Activated CD4-positive, alpha-beta T cell treated with anti-CD3 and anti-CD28 coated beads for 36 hours (primary cell): ENCODE measurements at regions of chr17 and their contacts with region 1.

Region 1: DNA sequence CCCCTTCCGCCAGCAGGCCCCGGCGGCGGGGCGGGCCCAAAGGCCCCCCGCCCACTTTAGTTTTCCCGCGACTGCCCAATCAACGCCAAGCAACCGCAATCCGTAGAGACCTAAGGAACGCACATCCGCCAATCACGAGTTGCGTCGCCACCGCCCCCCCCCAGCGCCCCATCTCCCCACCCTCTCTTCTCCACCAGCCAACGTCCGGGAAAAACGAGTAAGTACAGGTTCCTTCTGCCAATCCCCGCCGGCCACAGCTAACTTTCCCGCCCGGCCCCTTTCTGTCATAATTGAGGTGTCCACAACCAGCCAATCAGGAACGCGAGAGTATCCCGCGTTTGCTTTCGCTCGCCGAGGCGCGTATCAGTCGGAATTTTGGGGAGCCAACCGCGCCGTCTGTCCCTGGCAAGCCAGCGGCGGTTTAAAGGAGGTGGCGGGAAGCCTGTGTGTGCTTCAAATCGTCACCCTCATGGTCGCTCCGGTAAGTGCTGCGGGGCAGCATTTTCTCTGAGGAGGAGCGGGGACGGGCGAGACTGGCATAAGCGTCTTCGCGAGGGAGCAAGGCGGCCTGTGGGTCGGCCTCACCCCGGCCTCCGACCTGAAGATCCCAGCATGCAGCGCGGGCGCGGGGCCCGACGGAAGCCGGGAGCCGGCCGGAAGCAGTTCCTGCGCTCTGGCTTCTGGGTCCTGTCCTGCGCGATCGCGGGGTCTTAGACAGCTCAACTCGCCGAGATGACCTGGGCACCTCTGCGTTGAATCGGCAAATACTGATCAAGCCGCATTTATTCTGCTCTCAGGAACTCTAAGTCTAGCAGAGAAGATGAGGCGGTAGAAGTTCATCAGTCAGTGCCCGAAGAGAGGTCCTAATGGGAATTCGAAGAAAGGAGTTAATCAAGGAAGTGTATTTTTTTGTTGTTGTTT is at the start of gene MIS12:
- DNase-seq: peak; percentile 99
- ATAC-seq: peak; percentile 94
- H3K4me3 Mint-ChIP-seq: peak within 1 kb of the TSS; percentile 96
- H3K27ac Mint-ChIP-seq: peak within 1 kb of the TSS; percentile 98
- H3K4me1 Mint-ChIP-seq: peaks cover 50% of the 10 kb centered on the region
- H3K27me3 Mint-ChIP-seq: no peaks in the 10 kb centered on the region
- total RNA-seq, gene MIS12: 29.4 to 34.4 TPM

Region 2: DNA sequence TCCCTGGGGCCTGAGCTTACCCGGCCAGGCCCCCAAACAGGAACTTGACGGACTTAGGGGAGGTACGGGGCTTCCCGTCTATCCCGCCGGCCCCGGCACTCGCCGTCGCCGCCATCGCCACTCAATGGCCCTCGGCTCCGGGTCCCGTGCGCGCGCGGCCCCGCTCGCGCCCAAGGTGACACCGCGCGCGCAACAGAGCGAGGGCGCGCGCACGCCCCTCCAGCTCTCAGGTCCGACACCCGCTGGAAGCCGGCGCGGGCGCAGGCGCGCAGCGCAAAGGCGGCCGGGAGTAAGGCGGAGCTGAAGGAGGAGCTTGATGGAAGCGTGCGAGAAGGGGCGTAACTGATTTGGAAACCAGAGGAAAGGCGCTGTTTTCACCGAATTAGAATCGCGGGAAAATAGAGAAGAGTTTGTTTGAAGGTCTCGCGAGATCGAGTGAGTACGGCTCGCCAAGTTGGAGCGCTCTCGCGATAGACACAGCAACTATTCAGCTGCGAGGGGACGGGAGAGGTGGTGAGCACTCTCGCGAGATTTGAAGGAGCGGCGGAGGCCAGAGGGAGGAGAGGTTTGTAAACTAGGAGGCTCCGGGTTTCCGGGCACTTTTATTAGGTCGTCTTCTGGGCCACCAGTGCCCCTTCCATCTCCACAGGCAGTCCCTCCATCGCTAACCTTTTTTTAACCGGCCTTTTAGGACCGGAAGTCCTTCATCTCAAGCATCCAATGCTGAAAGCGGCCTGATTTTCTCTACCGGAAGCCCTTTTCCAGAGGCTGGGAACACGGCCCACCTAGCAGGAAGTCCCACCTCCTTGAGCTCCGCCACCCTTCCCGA is 546.5 kb before region 1 on chr17 and contains the starts of genes RNF167 and SLC25A11:
- CTCF ChIA-PET with region 1: no interaction called
- POLR2A ChIA-PET with region 1: no interaction called
- intact Hi-C with region 1: loop called in 1 of 2 experiments (anchors 1 kb)
- DNase-seq: peak; percentile 98
- ATAC-seq: peak; percentile 83
- H3K4me3 Mint-ChIP-seq: peak within 1 kb of the TSS; percentile 99
- H3K27ac Mint-ChIP-seq: peak within 1 kb of the TSS; percentile 97
- H3K4me1 Mint-ChIP-seq: peaks cover 54% of the 10 kb centered on the region
- H3K27me3 Mint-ChIP-seq: no peaks in the 10 kb centered on the region
- total RNA-seq, gene RNF167: 147 to 189 TPM
- total RNA-seq, gene SLC25A11: 74.2 to 77.9 TPM

Region 3: GRCh38 chr17:5191541-5192417 is 294.7 kb before region 1 on chr17 and contains the start of gene ZNF594:
- CTCF ChIA-PET with region 1: no interaction called
- POLR2A ChIA-PET with region 1: interaction called, 6 read pairs
- intact Hi-C with region 1: loop called in 1 of 2 experiments (anchors 1 kb)
- DNase-seq: peak; percentile 99
- ATAC-seq: peak; percentile 100
- H3K4me3 Mint-ChIP-seq: peak within 1 kb of the TSS; percentile 94
- H3K27ac Mint-ChIP-seq: peak within 1 kb of the TSS; percentile 88
- H3K4me1 Mint-ChIP-seq: peaks cover 27% of the 10 kb centered on the region
- H3K27me3 Mint-ChIP-seq: no peaks in the 10 kb centered on the region
- total RNA-seq, gene ZNF594: 8.0 to 8.4 TPM

Region 4: GRCh38 chr17:5297245-5297644 is 189.2 kb before region 1 on chr17:
- CTCF ChIA-PET with region 1: no interaction called
- POLR2A ChIA-PET with region 1: no interaction called
- intact Hi-C with region 1: no loop called
- DNase-seq: no peak
- ATAC-seq: peak; percentile 47
- H3K4me3 Mint-ChIP-seq: no peak overlapping the region
- H3K27ac Mint-ChIP-seq: no peak overlapping the region
- H3K4me1 Mint-ChIP-seq: peaks cover 40% of the 10 kb centered on the region
- H3K27me3 Mint-ChIP-seq: no peaks in the 10 kb centered on the region

Region 5: GRCh38 chr17:5468075-5468473 is 18.4 kb before region 1 on chr17:
- CTCF ChIA-PET with region 1: interaction called, 5 read pairs
- POLR2A ChIA-PET with region 1: interaction called, 9 read pairs
- intact Hi-C with region 1: loop called (anchors 1 kb)
- DNase-seq: peak; percentile 35
- ATAC-seq: peak; percentile 14
- H3K4me3 Mint-ChIP-seq: peak overlapping the region; percentile 90
- H3K27ac Mint-ChIP-seq: peak overlapping the region; percentile 75
- H3K4me1 Mint-ChIP-seq: peaks cover 38% of the 10 kb centered on the region
- H3K27me3 Mint-ChIP-seq: no peaks in the 10 kb centered on the region

Region 6: DNA sequence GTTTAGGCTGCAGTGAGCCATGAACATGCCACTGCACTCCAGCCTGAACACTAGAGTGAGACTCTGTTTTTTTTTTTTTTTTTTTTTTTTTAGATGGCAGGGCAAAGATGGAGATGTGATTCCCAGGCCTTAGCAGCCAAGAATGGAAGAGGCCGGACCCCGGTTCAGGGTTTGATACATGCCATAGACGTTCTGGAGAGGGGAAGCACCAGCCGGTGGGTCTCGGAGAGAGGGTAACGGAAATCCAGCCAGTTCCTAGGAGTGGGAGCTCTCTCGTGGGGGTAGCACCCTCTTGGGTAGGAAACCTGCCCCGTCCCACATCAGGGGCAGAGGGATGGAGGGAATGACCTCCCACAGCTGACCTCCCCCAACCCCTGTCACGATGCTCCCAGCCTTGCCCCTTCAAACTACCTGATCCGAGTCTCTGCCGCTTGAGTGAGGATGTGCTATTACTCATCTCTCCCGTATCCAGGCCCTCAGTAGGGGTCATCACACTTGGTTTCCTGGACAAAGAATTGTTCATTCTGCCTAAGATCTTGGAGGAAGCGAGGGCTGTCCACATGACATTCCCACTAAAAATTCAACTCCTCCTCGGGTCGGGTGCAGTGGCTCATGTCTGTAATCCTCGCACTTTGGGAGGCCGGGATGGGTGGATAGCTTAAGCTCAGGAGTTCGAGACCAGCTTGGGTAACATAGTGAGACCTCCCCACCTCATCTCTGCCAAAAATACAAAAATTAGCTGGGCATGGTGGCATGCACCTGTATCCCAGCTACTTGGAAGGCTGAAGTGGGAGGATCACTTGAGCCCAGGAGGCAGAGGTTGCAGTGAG is 47.2 kb after region 1 on chr17:
- CTCF ChIA-PET with region 1: no interaction called
- POLR2A ChIA-PET with region 1: no interaction called
- intact Hi-C with region 1: no loop called
- DNase-seq: no peak
- ATAC-seq: no peak
- H3K4me3 Mint-ChIP-seq: no peak overlapping the region
- H3K27ac Mint-ChIP-seq: no peak overlapping the region
- H3K4me1 Mint-ChIP-seq: no peaks in the 10 kb centered on the region
- H3K27me3 Mint-ChIP-seq: no peaks in the 10 kb centered on the region

Region 7: DNA sequence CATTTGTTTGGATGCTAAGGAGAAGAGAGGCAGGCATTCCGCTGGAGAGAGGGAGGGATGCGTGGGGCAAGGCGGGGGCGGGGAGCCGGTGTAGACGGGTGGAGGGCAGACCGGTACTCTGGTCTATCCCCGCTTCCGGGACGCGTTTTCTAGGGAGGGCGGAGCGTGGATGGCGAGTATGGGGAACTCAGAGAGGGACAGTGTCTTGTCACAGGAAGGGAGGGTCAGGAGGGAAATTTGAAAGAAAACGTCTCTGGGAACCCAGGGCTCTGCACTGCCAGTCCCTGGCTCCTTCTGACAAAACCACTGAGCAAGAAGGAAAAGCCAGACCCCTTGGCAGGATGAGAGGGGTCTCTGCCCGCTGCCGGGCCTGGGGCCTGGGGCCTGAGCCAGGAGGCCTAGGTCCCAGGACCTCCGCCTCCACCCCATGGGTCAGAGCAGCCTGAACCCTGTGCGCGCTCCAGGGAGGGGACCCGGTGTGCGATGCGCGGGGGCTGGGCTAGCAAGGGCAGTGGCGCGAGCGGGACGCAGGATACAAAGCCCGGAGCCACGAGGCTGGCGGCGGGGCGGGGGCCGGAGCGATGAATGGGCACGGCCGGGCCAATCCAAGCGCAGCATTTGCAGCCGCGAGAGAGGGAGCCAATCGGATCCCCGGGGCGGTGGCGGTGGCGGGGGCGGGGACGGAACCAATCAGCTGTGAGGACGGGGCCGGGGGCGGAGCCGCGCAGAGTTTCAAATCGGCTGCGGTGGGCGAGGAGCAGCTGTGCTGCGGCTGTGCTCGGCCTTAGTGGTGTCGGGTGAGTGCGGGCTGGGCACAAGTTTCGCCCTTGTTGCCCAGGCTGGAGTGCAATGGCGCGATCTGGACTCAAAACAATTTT is 957.5 kb after region 1 on chr17 and contains the start of gene PIMREG:
- CTCF ChIA-PET with region 1: interaction called, 3 read pairs
- POLR2A ChIA-PET with region 1: no interaction called
- intact Hi-C with region 1: loop called in 1 of 2 experiments (anchors 2 kb)
- DNase-seq: peak; percentile 97
- ATAC-seq: peak; percentile 98
- H3K4me3 Mint-ChIP-seq: peak within 1 kb of the TSS; percentile 77
- H3K27ac Mint-ChIP-seq: peak within 1 kb of the TSS; percentile 90
- H3K4me1 Mint-ChIP-seq: peaks cover 12% of the 10 kb centered on the region
- H3K27me3 Mint-ChIP-seq: peaks cover 7% of the 10 kb centered on the region
- total RNA-seq, gene PIMREG: 8.4 to 10.0 TPM

Region 8: GRCh38 chr17:7239091-7240027 is 1752.9 kb after region 1 on chr17 and contains the start of gene PHF23:
- CTCF ChIA-PET with region 1: no interaction called
- POLR2A ChIA-PET with region 1: no interaction called
- intact Hi-C with region 1: loop called in 1 of 2 experiments (anchors 1 kb)
- DNase-seq: peak; percentile 99
- ATAC-seq: peak; percentile 74
- H3K4me3 Mint-ChIP-seq: peak within 1 kb of the TSS; percentile 97
- H3K27ac Mint-ChIP-seq: peak within 1 kb of the TSS; percentile 93
- H3K4me1 Mint-ChIP-seq: peaks cover 61% of the 10 kb centered on the region
- H3K27me3 Mint-ChIP-seq: no peaks in the 10 kb centered on the region
- total RNA-seq, gene PHF23: 23.6 to 35.2 TPM